PC-3 (cell line): ENCODE measurements at regions of chr6 and their contacts with region 1.

Region 1: DNA sequence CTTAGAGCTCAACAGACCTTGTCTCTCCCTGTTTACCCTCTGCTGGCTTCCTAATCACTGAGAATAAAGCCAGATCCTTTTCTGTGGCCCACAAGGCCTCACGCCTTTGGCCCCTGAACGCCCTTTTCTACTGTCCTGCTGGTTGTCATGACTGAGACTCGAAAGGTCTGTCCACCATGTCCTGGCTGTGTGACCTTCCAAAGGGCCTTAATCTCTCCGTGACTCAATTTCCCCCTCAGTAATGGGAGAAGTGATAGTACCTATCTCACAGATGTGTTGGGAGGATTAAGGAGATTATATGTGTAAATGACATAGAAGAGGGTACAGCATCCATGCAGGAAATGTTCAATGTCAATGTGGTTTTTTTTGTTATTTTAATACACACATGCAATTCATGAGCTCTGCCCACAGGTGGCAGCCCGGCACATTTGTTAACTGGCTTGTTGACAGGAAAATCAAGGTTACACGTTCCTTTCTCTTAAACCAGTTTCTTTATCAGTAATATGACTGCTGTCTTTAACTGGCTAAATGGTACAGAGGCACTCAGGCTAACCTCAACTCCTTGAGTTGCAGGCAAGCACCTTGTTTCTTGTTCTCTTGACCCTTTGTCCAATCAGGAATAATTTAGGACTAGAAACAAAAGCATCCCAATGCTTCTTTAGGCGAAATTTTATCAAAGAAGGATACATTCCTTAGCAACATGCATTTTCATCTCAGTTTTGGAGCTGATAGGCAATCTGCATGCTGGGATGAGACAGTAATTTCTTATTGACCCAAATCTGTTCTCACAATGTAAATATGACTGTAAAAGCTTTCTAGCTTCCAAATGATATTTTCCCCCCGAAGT is 16.6 kb downstream of the SLC22A1 start:
- DNase-seq: peak; percentile 74
- ATAC-seq: peak; percentile 13; the same call in 1 of the 2 replicates
- H3K4me3 ChIP-seq: no peak overlapping the region
- H3K27ac ChIP-seq: peak overlapping the region; percentile 70
- H3K4me1 ChIP-seq: peaks cover 31% of the 10 kb centered on the region
- H3K27me3 ChIP-seq: no peaks in the 10 kb centered on the region
- CTCF ChIP-seq: peak; percentile 79

Region 2: DNA sequence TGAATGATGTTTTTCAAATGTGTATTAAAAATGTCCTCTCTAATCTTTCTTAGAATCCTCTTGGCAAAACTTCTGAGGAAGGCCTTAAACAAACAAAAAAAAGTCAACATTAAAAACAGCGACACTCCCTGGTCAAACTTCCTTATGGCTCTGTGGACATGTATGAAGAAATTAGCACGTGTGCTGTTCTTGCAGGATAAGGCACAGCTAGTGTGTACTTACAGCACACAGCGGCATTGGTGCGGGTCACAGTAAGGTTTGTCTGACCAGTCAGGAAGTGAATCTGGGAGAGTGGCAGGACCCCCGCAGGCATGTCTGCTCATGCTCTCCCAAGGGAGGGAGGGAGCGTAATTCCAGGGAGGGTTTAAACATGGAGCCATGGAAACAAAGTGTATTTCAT is 22.2 kb after region 1 on chr6:
- CTCF ChIA-PET with region 1: no interaction called
- POLR2A ChIA-PET with region 1: no interaction called
- intact Hi-C with region 1: loop called (anchors 1 kb)
- DNase-seq: peak; percentile 55
- ATAC-seq: peak; percentile 57
- H3K4me3 ChIP-seq: no peak overlapping the region
- H3K27ac ChIP-seq: no peak overlapping the region
- H3K4me1 ChIP-seq: peaks cover 6% of the 10 kb centered on the region; the same call in 1 of the 2 replicates
- H3K27me3 ChIP-seq: no peaks in the 10 kb centered on the region
- CTCF ChIP-seq: peak; percentile 55

Region 3: DNA sequence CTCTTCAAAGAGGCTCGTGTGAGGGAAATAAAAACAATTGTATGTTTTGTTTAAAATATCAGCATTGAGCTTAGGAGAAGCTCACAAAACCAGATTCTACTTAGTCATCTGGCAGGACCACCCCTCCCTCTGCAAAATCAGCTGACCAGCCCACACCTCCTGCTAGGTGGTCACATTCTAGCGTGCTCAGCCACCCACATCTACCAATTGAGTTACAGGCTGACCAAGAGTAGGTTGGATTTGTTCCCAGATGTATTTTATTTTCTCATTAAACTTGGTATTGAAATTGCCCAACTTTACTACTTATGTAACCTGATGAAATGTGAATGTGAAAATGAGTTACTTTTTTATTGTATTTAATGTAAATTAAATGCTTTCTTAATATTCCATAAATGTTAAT is 64.2 kb after region 1 on chr6:
- CTCF ChIA-PET with region 1: no interaction called
- POLR2A ChIA-PET with region 1: no interaction called
- intact Hi-C with region 1: loop called (anchors 5 kb)
- DNase-seq: peak; percentile 3
- ATAC-seq: no peak
- H3K4me3 ChIP-seq: no peak overlapping the region
- H3K27ac ChIP-seq: no peak overlapping the region
- H3K4me1 ChIP-seq: no peaks in the 10 kb centered on the region; the same call in 1 of the 2 replicates
- H3K27me3 ChIP-seq: no peaks in the 10 kb centered on the region
- CTCF ChIP-seq: no peak

Region 4: DNA sequence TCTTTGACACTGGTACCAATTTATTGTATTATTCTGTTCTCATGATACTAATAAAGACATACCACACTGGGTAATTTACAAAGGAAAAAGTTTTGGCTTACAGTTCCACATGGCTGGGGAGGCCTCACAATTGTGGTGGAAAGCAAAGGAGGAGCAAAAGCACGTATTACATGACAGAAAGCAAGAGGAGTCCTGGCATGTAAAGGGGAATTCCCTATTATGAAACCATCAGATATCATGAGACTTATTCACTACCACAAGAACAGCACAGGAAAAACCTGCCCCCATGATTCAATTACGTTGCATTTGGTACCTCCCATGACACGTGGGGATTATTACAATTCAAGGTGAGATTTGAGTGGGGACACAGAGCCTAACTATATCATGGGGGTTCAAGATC is 77.0 kb after region 1 on chr6:
- CTCF ChIA-PET with region 1: no interaction called
- POLR2A ChIA-PET with region 1: no interaction called
- intact Hi-C with region 1: loop called (anchors 5 kb)
- DNase-seq: no peak
- ATAC-seq: no peak
- H3K4me3 ChIP-seq: no peak overlapping the region
- H3K27ac ChIP-seq: no peak overlapping the region
- H3K4me1 ChIP-seq: no peaks in the 10 kb centered on the region
- H3K27me3 ChIP-seq: no peaks in the 10 kb centered on the region
- CTCF ChIP-seq: no peak

Region 5: DNA sequence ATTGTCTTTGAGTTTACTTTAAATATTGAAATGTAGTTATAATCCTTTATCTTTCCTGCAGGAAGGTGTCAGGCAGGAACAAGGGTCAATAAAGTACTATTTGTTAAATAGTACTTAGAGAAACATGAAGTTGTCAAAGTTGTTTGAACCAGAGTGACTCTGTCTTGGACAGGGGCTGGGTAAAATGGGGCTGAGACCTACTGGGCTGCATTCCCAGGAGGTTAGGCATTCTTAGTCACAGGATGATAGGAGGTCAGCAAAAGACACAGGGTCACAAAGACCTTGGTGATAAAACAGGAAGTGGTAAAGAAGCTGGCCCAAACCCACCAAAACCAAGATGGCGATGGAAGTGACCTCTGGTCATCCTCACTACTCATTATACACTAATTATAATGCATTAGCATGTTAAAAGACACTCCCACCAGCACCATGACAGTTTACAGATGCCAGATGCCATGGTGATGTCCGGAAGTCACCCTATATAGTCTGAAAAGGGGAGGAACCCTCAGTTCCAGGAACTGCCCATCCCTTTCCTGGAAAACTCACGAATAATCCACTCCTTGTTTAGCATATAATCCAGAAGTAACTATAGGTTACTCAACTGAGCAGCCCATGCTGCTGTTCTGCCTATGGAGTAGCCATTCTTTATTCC is 100.7 kb after region 1 on chr6:
- CTCF ChIA-PET with region 1: no interaction called
- POLR2A ChIA-PET with region 1: no interaction called
- intact Hi-C with region 1: loop called (anchors 5 kb)
- DNase-seq: peak; percentile 66
- ATAC-seq: peak; percentile 66
- H3K4me3 ChIP-seq: peak overlapping the region; percentile 9; the same call in 1 of the 2 replicates
- H3K27ac ChIP-seq: peak overlapping the region; percentile 93
- H3K4me1 ChIP-seq: peaks cover 33% of the 10 kb centered on the region
- H3K27me3 ChIP-seq: no peaks in the 10 kb centered on the region
- CTCF ChIP-seq: no peak

Region 6: DNA sequence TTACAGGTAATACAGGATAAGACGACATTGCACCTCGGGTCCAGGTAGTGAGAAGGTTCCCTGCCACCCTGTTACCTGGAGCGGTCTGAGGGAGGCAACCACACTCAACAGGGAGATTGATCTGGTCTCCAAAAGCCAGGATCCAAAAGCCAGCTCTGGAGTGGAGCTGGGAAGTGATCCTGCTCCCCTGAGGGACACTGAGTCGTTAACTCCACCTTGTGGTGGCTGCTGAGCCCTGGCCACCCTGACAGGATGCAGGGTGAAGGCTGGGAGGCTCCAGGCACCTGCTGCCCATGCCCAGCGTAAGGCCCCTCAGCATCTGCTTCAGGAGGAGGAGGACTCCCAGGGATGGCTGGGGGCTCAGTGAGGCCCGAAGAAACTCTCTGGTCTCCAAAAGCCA is 159.1 kb after region 1 on chr6:
- CTCF ChIA-PET with region 1: interaction called, 9 read pairs
- POLR2A ChIA-PET with region 1: no interaction called
- intact Hi-C with region 1: loop called (anchors 1 kb)
- DNase-seq: peak; percentile 51
- ATAC-seq: peak; percentile 87
- H3K4me3 ChIP-seq: no peak overlapping the region
- H3K27ac ChIP-seq: no peak overlapping the region
- H3K4me1 ChIP-seq: peaks cover 3% of the 10 kb centered on the region; the same call in 1 of the 2 replicates
- H3K27me3 ChIP-seq: no peaks in the 10 kb centered on the region
- CTCF ChIP-seq: peak; percentile 46

Region 7: DNA sequence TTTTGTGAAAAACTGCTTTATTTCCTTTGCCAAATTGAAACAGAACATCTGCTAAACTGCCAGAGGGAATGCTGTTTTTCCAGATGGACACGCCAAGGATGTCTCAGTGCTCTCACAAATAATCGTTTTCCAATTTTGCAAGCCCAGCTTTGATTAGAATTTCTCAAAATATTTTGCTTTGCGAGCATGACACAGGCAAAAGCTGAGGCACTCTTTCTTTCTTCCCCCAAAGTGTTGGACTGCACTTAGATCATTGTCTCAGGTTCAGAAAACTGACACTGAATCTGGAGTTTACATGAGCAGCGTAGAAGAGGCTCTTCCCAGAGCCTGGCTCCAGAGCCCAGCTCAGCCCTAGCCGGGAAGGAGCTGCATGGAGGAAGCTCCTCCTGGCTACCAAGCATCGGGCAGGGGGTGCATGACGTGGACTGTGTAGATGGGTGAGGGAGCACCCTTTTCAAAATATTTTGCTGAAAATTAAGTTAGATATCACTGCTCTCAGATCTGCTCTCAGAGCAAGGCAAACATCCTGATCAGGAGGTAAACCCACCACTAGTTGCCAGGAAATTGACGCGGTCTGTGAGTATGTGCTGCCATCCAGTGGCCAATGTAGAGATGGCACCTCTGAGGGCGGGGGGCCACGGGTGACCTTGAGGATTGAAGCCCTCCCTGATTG is 317.5 kb after region 1 on chr6:
- CTCF ChIA-PET with region 1: interaction called, 3 read pairs
- POLR2A ChIA-PET with region 1: no interaction called
- intact Hi-C with region 1: loop called (anchors 1 kb)
- DNase-seq: peak; percentile 64
- ATAC-seq: peak; percentile 78
- H3K4me3 ChIP-seq: no peak overlapping the region
- H3K27ac ChIP-seq: no peak overlapping the region
- H3K4me1 ChIP-seq: peaks cover 15% of the 10 kb centered on the region
- H3K27me3 ChIP-seq: no peaks in the 10 kb centered on the region
- CTCF ChIP-seq: peak; percentile 91